ENCODE measurements at regions of chr11 and their contacts with region 1.

Region 1: GRCh38 chr11:122215244-122215992 is 99.4 kb upstream of the BLID start:
- DNase-seq: peak; percentile 53 to 79 (median 74)
- H3K4me3 ChIP-seq: no peak overlapping the region
- H3K27ac ChIP-seq: no peak overlapping the region
- H3K4me1 ChIP-seq: peaks cover 0 to 3% (median 1%) of the 10 kb centered on the region in 4 experiments
- H3K27me3 ChIP-seq: no peaks in the 10 kb centered on the region

Region 2: GRCh38 chr11:122195790-122196189 is 19.6 kb before region 1 on chr11:
- CTCF ChIA-PET with region 1: no interaction called
- POLR2A ChIA-PET with region 1: no interaction called
- DNase-seq: no peak
- H3K4me3 ChIP-seq: no peak overlapping the region
- H3K27ac ChIP-seq: no peak overlapping the region
- H3K4me1 ChIP-seq: no peaks in the 10 kb centered on the region
- H3K27me3 ChIP-seq: no peaks in the 10 kb centered on the region

Region 3: GRCh38 chr11:122375687-122376398 is 160.4 kb after region 1 on chr11:
- CTCF ChIA-PET with region 1: no interaction called
- POLR2A ChIA-PET with region 1: no interaction called
- DNase-seq: no peak
- H3K4me3 ChIP-seq: no peak overlapping the region
- H3K27ac ChIP-seq: no peak overlapping the region
- H3K4me1 ChIP-seq: no peaks in the 10 kb centered on the region
- H3K27me3 ChIP-seq: peaks cover 0 to 2% (median 0%) of the 10 kb centered on the region in 5 experiments

Region 4: DNA sequence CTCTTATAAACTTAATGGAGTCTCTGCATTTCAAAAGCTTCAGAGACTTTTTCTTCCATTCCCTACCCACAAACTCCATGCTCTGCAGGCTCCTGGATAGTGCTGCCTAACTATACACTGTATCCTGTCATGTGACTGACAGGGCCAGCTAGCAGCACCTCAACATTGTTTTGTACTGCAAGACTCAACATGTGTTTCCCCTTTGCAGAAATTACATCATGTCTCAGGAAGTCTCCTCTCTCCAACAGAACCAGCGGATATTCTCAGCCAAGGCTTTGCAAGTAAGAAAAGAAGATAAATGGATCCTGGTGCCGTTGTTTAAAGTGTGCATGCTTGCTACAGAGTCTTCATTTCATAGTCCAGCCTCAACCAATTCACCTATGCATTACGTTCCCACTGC is 276.1 kb after region 1 on chr11:
- CTCF ChIA-PET with region 1: interaction called, 12 read pairs
- POLR2A ChIA-PET with region 1: no interaction called
- DNase-seq: peak; percentile 26 to 86 (median 79)
- H3K4me3 ChIP-seq: peak overlapping the region in 2 of 7 experiments; percentile 3 to 15
- H3K27ac ChIP-seq: no peak overlapping the region
- H3K4me1 ChIP-seq: peaks cover 0 to 18% (median 9%) of the 10 kb centered on the region in 4 experiments
- H3K27me3 ChIP-seq: no peaks in the 10 kb centered on the region

Region 5: GRCh38 chr11:122505304-122506006 is 290.0 kb after region 1 on chr11:
- CTCF ChIA-PET with region 1: interaction called, 91 read pairs
- POLR2A ChIA-PET with region 1: no interaction called
- DNase-seq: peak; percentile 57 to 79 (median 75)
- H3K4me3 ChIP-seq: no peak overlapping the region
- H3K27ac ChIP-seq: no peak overlapping the region
- H3K4me1 ChIP-seq: peaks cover 0 to 4% (median 1%) of the 10 kb centered on the region in 4 experiments
- H3K27me3 ChIP-seq: peaks cover 0 to 2% (median 0%) of the 10 kb centered on the region in 5 experiments

Measured in common myeloid progenitor, CD34-positive (primary cell).